T-cell (primary cell): ENCODE measurements at regions of chr11 and their contacts with region 1.

Region 1: GRCh38 chr11:59668950-59669610 is at the start of gene PATL1:
- DNase-seq: peak; percentile 92 to 100 (median 99)
- ATAC-seq: peak; percentile 91 to 94 (median 93)
- H3K4me3 ChIP-seq: peak within 1 kb of the TSS; percentile 85 to 96
- H3K4me3 Mint-ChIP-seq: peak within 1 kb of the TSS; percentile 94 to 97 (median 94)
- H3K27ac ChIP-seq: peak within 1 kb of the TSS; percentile 96
- H3K27ac Mint-ChIP-seq: peak within 1 kb of the TSS; percentile 99 to 100
- H3K4me1 ChIP-seq: peaks cover 18 to 20% of the 10 kb centered on the region in 2 experiments
- H3K4me1 Mint-ChIP-seq: peaks cover 41 to 46% (median 45%) of the 10 kb centered on the region in 3 donors
- H3K27me3 ChIP-seq: no peaks in the 10 kb centered on the region
- H3K27me3 Mint-ChIP-seq: no peaks in the 10 kb centered on the region
- total RNA-seq, gene PATL1: 37.0 to 49.7 (median 41.9) TPM

Region 2: GRCh38 chr11:59615637-59616395 is 53.3 kb before region 1 on chr11 and contains the start of gene OSBP:
- CTCF ChIA-PET with region 1: interaction called in 1 of 2 experiments, 35 read pairs
- POLR2A ChIA-PET with region 1: interaction called, 11 to 45 read pairs
- DNase-seq: peak; percentile 92 to 100 (median 99)
- ATAC-seq: peak; percentile 80 to 84 (median 83)
- H3K4me3 ChIP-seq: peak within 1 kb of the TSS; percentile 84 to 97
- H3K4me3 Mint-ChIP-seq: peak within 1 kb of the TSS; percentile 89 to 96 (median 93)
- H3K27ac ChIP-seq: peak within 1 kb of the TSS; percentile 95
- H3K27ac Mint-ChIP-seq: peak within 1 kb of the TSS; percentile 88 to 91
- H3K4me1 ChIP-seq: peaks cover 24% of the 10 kb centered on the region in 2 experiments
- H3K4me1 Mint-ChIP-seq: peaks cover 46 to 48% (median 48%) of the 10 kb centered on the region in 3 donors
- H3K27me3 ChIP-seq: no peaks in the 10 kb centered on the region
- H3K27me3 Mint-ChIP-seq: no peaks in the 10 kb centered on the region
- total RNA-seq, gene OSBP: 44.0 to 59.0 (median 46.2) TPM

Region 3: DNA sequence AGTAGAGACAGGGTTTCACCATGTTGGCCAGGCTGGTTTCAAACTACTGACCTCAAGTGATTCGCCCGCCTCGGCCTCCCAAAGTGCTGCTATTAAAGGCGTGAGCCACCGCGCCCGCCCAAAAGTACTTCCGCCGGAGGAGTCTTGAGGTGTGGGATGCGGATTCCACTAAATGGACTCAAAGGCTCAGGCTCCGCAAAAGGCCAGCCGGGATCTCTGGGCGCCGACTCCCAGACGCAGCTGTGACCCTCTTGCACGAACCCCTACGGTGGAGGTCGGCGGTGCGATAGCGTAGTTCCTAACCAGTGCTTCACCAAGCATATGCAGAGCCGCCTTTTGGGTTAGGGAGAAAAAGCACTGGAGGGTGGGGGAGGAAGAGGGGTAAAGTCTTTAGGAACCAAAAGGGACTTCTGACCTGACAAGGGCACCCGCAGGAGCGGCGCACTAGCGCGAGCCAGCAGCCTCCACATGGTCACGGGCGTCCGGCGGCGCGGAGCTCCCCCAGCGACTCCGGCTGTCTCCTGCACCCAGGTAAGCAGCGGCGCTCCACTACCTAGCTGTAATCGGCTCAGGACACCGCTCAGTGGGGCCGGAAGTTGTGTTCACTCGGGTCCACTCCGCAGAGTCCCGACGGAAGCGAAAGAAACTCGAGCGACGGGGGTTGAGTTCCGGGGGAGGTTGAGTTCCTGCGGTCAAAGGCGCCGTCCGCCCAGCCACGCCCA is 141.3 kb after region 1 on chr11 and contains the start of gene MRPL16:
- CTCF ChIA-PET with region 1: interaction called, 11 to 17 read pairs
- POLR2A ChIA-PET with region 1: interaction called in 1 of 2 experiments, 4 read pairs
- DNase-seq: peak; percentile 78 to 94 (median 86)
- ATAC-seq: peak; percentile 99
- H3K4me3 ChIP-seq: peak within 1 kb of the TSS; percentile 73 to 91
- H3K4me3 Mint-ChIP-seq: peak within 1 kb of the TSS; percentile 89 to 92 (median 89)
- H3K27ac ChIP-seq: peak within 1 kb of the TSS; percentile 63
- H3K27ac Mint-ChIP-seq: peak within 1 kb of the TSS; percentile 78 to 91
- H3K4me1 ChIP-seq: peaks cover 6 to 16% of the 10 kb centered on the region in 2 experiments
- H3K4me1 Mint-ChIP-seq: peaks cover 24 to 29% (median 24%) of the 10 kb centered on the region in 3 donors
- H3K27me3 ChIP-seq: no peaks in the 10 kb centered on the region
- H3K27me3 Mint-ChIP-seq: no peaks in the 10 kb centered on the region
- total RNA-seq, gene MRPL16: 24.0 to 46.3 (median 39.7) TPM